A549 (cell line): ENCODE measurements at regions of chr12 and their contacts with region 1.

Region 1: DNA sequence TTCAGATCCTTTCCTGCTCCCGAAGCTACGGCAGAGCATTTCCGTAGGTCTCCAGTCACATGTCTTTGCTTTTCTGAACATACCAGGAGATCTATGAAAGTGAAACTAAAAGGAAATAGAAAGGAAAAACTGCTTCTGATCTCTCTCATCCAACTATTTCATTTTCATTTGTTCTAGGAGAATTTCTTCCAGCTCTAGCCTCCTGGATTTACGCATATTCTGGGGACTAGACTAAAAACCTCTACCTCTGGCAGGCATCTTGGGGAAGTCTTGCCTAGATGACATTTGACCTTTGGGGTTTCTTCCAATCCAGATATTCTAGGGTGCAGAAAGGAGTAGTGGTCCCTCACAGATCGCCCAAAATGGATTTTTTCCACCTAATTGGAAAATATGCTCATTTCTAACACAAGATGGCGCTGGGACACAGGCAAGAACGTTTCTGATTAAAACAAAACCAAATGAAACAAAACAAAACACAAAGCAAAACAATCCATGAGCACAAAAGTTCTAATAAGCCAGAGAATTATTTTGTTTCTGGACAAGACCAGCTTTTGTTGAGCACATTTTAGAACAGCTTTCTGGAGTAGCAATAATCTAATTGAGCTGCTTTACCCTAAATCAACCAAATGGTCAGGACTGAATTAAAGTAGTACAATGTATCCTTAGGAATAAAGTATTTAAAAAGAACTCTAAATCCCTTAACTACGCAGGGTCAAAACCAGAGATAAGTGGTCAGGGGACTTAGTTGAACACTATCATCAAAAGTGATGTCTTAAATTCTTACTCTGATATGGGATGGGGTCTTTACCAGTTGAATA is 12.3 kb upstream of the PARP11 start:
- DNase-seq: peak; percentile 17 to 40
- ATAC-seq: peak in 1 of 2 experiments; percentile 42; a peak in 1 of 6 replicates
- H3K4me3 ChIP-seq: no peak overlapping the region
- H3K27ac ChIP-seq: no peak overlapping the region
- H3K4me1 ChIP-seq: no peaks in the 10 kb centered on the region
- CTCF ChIP-seq: peak; percentile 89
- EP300 ChIP-seq: no peak
- POLR2A ChIP-seq: no peak
- RAD21 ChIP-seq: peak; percentile 84 to 89

Region 2: DNA sequence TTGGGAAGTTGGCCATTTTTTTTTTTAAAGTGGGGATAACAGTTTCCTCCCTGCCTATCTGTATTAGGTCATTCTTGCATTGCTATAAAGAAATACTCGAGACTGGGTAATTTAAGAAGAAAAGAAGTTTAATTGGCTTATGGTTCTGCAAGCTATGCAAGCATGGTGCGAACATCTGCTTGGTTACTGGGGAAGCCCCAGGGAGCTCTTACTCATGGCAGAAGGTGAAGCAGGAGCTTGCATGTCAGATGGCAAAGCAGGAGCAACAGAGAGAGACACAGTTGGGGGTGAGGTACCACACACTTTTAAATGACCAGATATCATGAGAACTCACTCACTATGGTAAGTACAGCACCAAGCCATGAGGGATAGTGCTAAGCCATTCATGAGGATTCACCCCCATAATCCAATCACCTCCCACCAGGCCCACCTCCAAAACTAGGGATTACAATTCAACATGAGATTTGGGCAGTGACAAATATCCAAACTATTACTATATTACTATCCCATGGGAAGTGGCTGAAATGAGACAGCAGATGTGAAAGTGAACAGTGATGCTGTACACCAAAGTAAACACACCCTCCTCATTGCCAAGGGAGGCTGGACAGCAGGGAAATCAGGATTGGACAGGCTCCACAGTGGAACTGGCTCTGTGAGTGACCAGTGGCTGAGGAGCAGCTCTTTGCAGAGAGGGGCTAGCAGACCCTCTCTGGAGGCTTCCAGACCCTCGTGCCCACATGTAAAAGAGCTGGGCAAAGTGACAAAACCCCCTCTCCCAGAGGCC is 173.1 kb before region 1 on chr12:
- CTCF ChIA-PET with region 1: no interaction called
- POLR2A ChIA-PET with region 1: no interaction called
- DNase-seq: no peak
- ATAC-seq: no peak
- H3K4me3 ChIP-seq: no peak overlapping the region
- H3K27ac ChIP-seq: no peak overlapping the region
- H3K4me1 ChIP-seq: no peaks in the 10 kb centered on the region
- CTCF ChIP-seq: no peak
- EP300 ChIP-seq: no peak
- POLR2A ChIP-seq: no peak
- RAD21 ChIP-seq: no peak

Region 3: GRCh38 chr12:3896801-3897331 is 11.4 kb after region 1 on chr12:
- CTCF ChIA-PET with region 1: interaction called, 17 read pairs
- POLR2A ChIA-PET with region 1: no interaction called
- DNase-seq: no peak
- ATAC-seq: no peak
- H3K4me3 ChIP-seq: no peak overlapping the region
- H3K27ac ChIP-seq: no peak overlapping the region
- H3K4me1 ChIP-seq: no peaks in the 10 kb centered on the region
- CTCF ChIP-seq: no peak
- EP300 ChIP-seq: no peak
- POLR2A ChIP-seq: no peak
- RAD21 ChIP-seq: no peak

Region 4: DNA sequence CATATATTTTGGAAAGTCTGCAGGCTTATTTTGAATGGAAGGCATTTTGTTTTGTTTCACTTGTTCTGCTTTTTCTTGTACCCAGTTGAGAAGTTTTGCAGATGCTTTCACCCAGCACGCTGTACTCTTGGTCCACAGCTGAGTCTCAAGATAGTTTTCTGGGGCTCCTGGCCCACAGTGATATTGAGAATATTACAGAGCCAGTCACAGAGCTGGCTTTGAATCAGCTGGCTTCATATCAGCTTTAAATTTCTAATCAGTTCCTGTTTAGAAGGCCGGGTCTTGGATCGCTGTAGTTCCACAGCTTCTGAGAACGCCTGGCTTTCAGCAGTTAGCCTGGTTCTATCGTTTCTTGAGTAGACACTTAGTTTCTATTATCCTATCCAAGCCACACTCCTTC is 20.2 kb after region 1 on chr12:
- CTCF ChIA-PET with region 1: interaction called, 11 read pairs
- POLR2A ChIA-PET with region 1: no interaction called
- DNase-seq: no peak
- ATAC-seq: no peak
- H3K4me3 ChIP-seq: no peak overlapping the region
- H3K27ac ChIP-seq: no peak overlapping the region
- H3K4me1 ChIP-seq: no peaks in the 10 kb centered on the region
- CTCF ChIP-seq: no peak
- EP300 ChIP-seq: no peak
- POLR2A ChIP-seq: no peak
- RAD21 ChIP-seq: no peak

Region 5: DNA sequence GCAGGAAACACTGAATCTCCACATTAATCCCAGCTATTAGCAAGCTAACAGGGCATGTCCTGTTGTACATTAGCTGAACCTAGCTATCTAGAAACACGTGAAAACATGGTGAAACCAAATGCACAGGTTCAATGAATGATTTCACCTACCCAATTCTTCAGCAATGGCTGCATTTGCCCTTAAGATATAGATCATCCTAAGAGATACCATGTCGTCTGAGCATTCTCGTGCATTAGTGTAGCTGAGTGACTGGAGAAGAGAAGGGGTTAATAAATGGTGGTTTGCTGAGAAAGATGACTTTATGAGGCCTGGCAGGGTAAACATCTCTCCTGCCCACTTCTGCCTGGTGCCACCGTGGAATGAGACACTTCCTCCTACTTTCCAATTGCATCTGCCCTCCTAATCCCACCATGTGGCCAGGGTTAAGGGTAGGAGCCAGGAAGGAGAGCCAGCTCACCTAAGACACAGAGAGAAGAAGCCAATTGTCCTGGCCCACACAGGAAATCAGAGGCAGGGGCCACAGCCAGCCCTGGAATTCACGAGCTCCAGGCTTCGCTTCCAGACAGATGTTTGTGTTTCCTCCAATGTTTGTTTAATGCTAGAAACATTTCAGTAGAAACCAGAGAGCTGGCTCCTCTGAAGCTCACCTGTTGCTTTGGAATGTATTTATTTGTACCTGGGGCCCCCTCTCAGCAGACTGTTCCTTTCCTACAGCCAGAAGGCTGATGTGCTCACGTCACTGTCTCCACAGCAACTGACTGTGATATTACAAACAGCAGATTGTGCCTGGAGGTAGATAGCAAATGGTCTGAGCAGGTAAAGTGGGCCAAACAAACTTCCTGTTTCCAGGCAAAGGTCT is 113.7 kb after region 1 on chr12:
- CTCF ChIA-PET with region 1: interaction called, 20 read pairs
- POLR2A ChIA-PET with region 1: no interaction called
- DNase-seq: peak in 1 of 2 experiments; percentile 40
- ATAC-seq: no peak
- H3K4me3 ChIP-seq: no peak overlapping the region
- H3K27ac ChIP-seq: no peak overlapping the region
- H3K4me1 ChIP-seq: no peaks in the 10 kb centered on the region
- CTCF ChIP-seq: no peak
- EP300 ChIP-seq: no peak
- POLR2A ChIP-seq: no peak
- RAD21 ChIP-seq: no peak

Region 6: DNA sequence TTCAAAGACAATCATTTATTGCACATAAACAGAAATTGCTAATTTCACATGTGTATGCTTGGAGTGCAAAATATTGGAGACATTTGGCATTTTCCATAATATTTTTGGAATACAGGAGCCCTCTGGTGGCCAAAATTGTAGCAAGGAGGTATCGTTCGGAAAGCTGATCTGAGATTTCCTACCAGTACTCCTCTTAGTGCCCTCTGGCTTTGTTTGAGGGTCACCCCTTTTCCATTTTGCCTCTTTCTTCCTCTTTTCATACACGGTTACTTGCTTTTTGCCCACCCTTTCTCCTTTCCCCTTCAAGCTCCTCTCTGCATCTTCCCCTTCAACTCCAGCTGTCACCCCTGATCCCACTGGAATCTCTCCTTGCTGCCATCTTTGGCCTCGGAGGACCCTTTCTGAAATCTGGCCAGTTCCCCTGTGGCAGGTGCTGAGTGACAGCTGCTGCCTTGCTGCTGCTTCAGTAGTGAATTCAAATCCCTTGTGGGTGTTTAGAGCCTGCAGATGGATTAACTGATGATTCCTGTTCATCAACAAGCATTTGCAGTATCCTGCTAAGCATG is 152.3 kb after region 1 on chr12:
- CTCF ChIA-PET with region 1: interaction called, 127 read pairs
- POLR2A ChIA-PET with region 1: no interaction called
- DNase-seq: peak; percentile 29 to 42
- ATAC-seq: peak; percentile 51 to 75; a peak in 3 of 6 replicates
- H3K4me3 ChIP-seq: no peak overlapping the region
- H3K27ac ChIP-seq: no peak overlapping the region
- H3K4me1 ChIP-seq: peaks cover 11% of the 10 kb centered on the region; the same call in 2 of the 3 replicates
- CTCF ChIP-seq: peak; percentile 80
- EP300 ChIP-seq: no peak
- POLR2A ChIP-seq: no peak
- RAD21 ChIP-seq: peak; percentile 79 to 81

Region 7: GRCh38 chr12:4287325-4288211 is 402.1 kb after region 1 on chr12:
- CTCF ChIA-PET with region 1: interaction called, 235 read pairs
- POLR2A ChIA-PET with region 1: no interaction called
- DNase-seq: no peak
- ATAC-seq: no peak
- H3K4me3 ChIP-seq: no peak overlapping the region
- H3K27ac ChIP-seq: no peak overlapping the region
- H3K4me1 ChIP-seq: no peaks in the 10 kb centered on the region
- CTCF ChIP-seq: no peak
- EP300 ChIP-seq: no peak
- POLR2A ChIP-seq: no peak
- RAD21 ChIP-seq: no peak